Endothelial cell of umbilical vein (primary cell): ENCODE measurements at regions of chr17 and their contacts with region 1.

Region 1: GRCh38 chr17:81346090-81346907 is 49.0 kb upstream of the BAHCC1 start:
- DNase-seq: peak; percentile 95
- H3K4me3 ChIP-seq: peak overlapping the region; percentile 28 to 89 (median 48)
- H3K27ac ChIP-seq: peak overlapping the region; percentile 62
- H3K4me1 ChIP-seq: peaks cover 19% of the 10 kb centered on the region
- H3K27me3 ChIP-seq: no peaks in the 10 kb centered on the region
- CTCF ChIP-seq: no peak
- POLR2A ChIP-seq: peak; percentile 68

Region 2: GRCh38 chr17:81135503-81136278 is 210.6 kb before region 1 on chr17:
- CTCF ChIA-PET with region 1: no interaction called
- POLR2A ChIA-PET with region 1: no interaction called
- dilution Hi-C with region 1: no loop called
- intact Hi-C with region 1: no loop called
- DNase-seq: no peak
- H3K4me3 ChIP-seq: no peak overlapping the region
- H3K27ac ChIP-seq: no peak overlapping the region
- H3K4me1 ChIP-seq: no peaks in the 10 kb centered on the region
- H3K27me3 ChIP-seq: no peaks in the 10 kb centered on the region
- CTCF ChIP-seq: no peak
- POLR2A ChIP-seq: no peak

Region 3: DNA sequence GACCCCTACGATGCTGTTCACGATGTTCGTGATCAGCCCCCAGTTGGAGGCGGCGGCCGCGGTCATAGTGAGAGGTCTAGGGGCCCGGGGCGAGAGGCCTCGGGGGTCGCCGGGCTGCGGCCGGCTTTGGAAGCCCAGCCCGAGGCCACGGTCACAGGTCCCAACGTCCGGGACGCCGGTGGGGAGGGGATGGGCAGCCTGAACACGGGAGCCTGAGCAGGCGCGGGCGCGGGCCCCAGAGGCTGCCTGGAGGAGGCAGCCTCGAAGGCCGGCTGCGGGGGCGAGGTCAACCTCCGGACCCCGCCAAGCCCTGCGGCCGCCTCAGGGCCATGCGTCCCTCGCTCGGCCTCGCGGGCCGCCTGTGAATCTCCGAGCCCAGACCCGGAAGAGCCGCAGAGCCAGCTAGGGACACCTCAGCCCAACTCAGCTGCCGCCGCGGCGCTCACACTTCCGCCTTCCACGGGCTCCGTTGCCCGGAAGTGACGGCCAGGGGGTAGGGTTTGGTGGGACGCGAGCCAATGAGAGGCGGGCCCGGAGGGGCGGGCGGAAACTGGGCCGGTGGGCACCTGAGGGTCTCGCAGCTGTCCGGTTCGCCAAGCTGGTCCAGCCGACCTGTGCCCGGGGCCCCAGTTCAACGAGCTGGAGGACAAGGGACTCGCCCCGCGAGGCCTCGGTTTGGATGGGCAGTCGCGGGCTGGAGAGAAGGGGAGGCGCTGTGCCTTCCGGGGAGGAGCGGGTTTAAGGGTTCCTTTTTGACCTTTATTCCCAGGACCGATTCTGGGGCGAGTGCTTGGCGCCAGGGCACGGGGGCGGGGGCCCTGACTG is 51.2 kb before region 1 on chr17 and contains the start of gene SLC38A10:
- CTCF ChIA-PET with region 1: no interaction called
- POLR2A ChIA-PET with region 1: no interaction called
- dilution Hi-C with region 1: no loop called
- intact Hi-C with region 1: loop called (anchors 1 kb)
- DNase-seq: peak; percentile 79
- H3K4me3 ChIP-seq: peak within 1 kb of the TSS; percentile 57 to 72 (median 63)
- H3K27ac ChIP-seq: peak within 1 kb of the TSS; percentile 86
- H3K4me1 ChIP-seq: peaks cover 14% of the 10 kb centered on the region
- H3K27me3 ChIP-seq: no peaks in the 10 kb centered on the region
- CTCF ChIP-seq: no peak
- POLR2A ChIP-seq: peak; percentile 91
- total RNA-seq, gene SLC38A10: 109 and 113 TPM in 2 replicates

Region 4: DNA sequence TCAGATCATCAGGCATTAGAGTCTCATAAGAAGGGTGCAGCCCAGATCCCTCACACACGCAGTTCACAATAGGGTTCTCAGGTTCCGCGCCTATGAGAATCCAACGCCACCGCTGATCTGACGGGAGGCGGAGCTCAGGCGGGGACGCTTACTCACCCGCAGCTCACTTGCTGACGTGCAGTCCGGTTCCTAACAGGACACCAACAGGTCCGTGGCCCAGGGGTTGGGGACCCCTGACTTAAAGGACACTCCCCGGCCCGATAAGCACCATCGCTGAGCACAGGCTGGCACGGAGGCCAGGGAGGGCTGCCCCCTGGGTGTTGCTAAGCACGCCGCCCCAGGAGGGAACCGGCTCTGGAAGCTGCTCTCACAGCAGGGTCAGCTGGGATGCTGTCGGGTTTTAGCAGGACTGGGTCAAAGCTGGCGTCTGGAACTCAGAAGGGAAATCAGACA is 18.9 kb after region 1 on chr17:
- CTCF ChIA-PET with region 1: interaction called, 4 read pairs
- POLR2A ChIA-PET with region 1: no interaction called
- dilution Hi-C with region 1: no loop called
- intact Hi-C with region 1: loop called (anchors 2 kb)
- DNase-seq: peak; percentile 61
- H3K4me3 ChIP-seq: no peak overlapping the region
- H3K27ac ChIP-seq: no peak overlapping the region
- H3K4me1 ChIP-seq: peaks cover 10% of the 10 kb centered on the region
- H3K27me3 ChIP-seq: peaks cover 0 to 2% of the 10 kb centered on the region in 2 experiments
- CTCF ChIP-seq: no peak
- POLR2A ChIP-seq: no peak

Region 5: DNA sequence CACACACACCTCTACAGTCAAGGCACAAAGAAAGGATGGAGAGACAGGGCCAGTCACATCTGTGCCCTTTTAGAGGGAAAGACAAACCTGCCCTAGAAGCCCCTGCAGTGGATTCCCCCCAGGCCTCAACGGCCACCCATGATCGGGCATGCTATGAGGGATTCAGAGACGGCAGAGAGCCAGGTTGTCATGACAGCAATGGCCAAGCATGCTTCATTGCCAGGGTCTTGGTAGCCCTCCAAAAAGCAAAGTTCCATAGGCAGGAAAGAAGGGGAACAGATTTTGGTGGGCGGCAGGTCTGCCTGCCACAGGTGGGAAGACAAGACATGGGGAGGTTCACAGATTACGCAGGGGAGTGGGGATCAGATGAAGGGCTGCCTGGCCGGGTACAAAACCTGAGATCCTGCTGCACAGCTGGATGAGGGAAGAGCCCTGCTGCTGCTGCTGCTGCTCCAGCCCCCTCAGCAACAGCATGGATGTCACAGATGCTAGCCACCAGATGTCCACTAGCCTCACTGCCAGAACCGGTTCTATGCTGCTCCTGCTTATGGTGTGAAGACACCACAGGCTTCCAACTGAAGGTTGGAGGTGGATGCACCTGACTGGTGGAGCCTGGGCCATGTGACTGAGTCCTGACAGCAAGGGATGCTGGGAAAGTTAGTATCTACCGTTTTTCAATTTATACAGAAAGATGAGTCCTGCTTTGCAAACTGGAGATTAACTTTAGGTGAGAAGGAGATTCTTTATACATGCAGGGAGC is 148.5 kb after region 1 on chr17:
- CTCF ChIA-PET with region 1: no interaction called
- POLR2A ChIA-PET with region 1: no interaction called
- dilution Hi-C with region 1: no loop called
- intact Hi-C with region 1: no loop called
- DNase-seq: no peak
- H3K4me3 ChIP-seq: no peak overlapping the region
- H3K27ac ChIP-seq: no peak overlapping the region
- H3K4me1 ChIP-seq: no peaks in the 10 kb centered on the region
- H3K27me3 ChIP-seq: peaks cover 8 to 12% of the 10 kb centered on the region in 2 experiments
- CTCF ChIP-seq: no peak
- POLR2A ChIP-seq: no peak